Activated CD4-positive, alpha-beta T cell treated with anti-CD3 and anti-CD28 coated beads, Interleukin-2, amount 10 ng/mL, durations not matched to agents 24 days and 14 days (primary cell): ENCODE measurements at regions of chr2 and their contacts with region 1.

Region 1: GRCh38 chr2:144215701-144216675 is 303.9 kb downstream of the ZEB2 start:
- DNase-seq: no peak
- H3K4me3 Mint-ChIP-seq: peak overlapping the region; percentile 46
- H3K27ac Mint-ChIP-seq: peak overlapping the region; percentile 89
- H3K4me1 Mint-ChIP-seq: peaks cover 21% of the 10 kb centered on the region
- H3K27me3 Mint-ChIP-seq: no peaks in the 10 kb centered on the region

Region 2: DNA sequence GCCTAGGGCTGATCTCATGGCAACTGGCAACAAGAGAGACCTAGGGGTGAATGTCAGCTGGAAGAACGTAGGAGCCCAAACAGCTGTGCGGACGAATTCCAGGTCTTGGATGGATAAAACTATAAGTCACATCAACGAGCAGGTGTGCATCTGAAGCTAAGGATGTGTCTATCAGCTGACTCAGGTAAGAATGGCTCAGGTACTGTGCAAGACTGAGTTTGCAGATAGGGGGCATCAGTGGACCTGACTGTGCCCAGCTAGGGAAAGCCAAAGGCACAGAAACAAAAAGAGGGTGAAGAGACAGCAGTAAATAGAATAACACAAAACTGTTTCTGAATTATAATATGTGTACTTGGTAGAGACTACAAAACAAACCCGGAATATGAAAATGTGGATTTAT is 53.3 kb before region 1 on chr2:
- intact Hi-C with region 1: loop called (anchors 5 kb)
- DNase-seq: peak; percentile 78
- H3K4me3 Mint-ChIP-seq: no peak overlapping the region
- H3K27ac Mint-ChIP-seq: no peak overlapping the region
- H3K4me1 Mint-ChIP-seq: peaks cover 5% of the 10 kb centered on the region
- H3K27me3 Mint-ChIP-seq: no peaks in the 10 kb centered on the region

Region 3: GRCh38 chr2:144201868-144202468 is 14.0 kb before region 1 on chr2:
- intact Hi-C with region 1: loop called (anchors 2 kb)
- DNase-seq: no peak
- H3K4me3 Mint-ChIP-seq: no peak overlapping the region
- H3K27ac Mint-ChIP-seq: peak overlapping the region; percentile 30
- H3K4me1 Mint-ChIP-seq: peaks cover 26% of the 10 kb centered on the region
- H3K27me3 Mint-ChIP-seq: no peaks in the 10 kb centered on the region